K562 (cell line): ENCODE measurements at regions of chr7 and their contacts with region 1.

Region 1: GRCh38 chr7:93055543-93056107 is 62.2 kb downstream of the SAMD9 start:
- DNase-seq: peak in 3 of 4 experiments; percentile 11 to 58 (median 55)
- ATAC-seq: peak; percentile 58
- H3K4me3 ChIP-seq: no peak overlapping the region
- H3K27ac ChIP-seq: no peak overlapping the region
- H3K4me1 ChIP-seq: peaks cover 13 to 18% of the 10 kb centered on the region in 2 experiments; a peak in 4 of 5 replicates
- H3K27me3 ChIP-seq: no peaks in the 10 kb centered on the region
- CTCF ChIP-seq: peak; percentile 52 to 90 (median 56); a peak in 5 of 6 replicates
- EP300 ChIP-seq: no peak
- POLR2A ChIP-seq: no peak
- RAD21 ChIP-seq: peak; percentile 95 to 96

Region 2: DNA sequence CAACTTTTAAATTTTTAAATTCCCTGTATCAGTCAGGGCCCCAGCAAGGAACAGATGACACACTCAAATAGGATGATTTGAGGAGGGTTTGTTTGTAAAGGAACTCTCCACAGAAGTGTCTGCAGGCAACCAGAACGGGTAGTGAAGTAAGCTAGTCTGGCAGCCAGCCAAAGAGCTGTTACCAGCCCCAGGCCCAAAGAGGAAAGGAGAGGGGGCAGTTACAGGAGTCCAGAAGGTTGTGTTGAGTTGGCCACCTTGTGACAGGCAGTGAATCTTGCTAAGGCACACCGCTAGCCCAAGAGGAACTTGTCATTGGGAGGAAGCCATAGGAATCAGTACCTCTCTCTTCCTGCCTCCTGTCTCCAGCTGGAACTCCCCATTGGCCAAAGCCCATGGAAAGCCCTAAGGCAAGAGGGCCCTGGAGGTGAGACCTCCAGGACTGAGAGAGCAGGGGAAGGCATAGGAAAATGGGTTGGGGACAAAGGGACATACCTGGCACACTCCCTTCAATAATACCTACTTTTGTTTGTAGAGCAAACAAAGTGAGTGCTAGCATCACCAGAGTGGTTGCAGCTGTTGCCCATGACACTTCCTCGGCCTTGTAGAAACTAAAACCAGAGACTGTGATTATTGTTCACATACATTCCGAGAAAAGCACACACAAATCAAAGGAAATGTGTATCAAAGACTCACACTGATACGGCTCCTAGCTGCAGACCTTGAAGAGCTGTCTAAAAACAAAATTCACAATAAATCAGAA is 633.8 kb before region 1 on chr7:
- CTCF ChIA-PET with region 1: interaction called, 9 read pairs
- POLR2A ChIA-PET with region 1: no interaction called
- in situ Hi-C with region 1: no loop called
- intact Hi-C with region 1: loop called (anchors 10 kb)
- DNase-seq: peak in 3 of 4 experiments; percentile 26 to 59 (median 33)
- ATAC-seq: no peak
- H3K4me3 ChIP-seq: no peak overlapping the region
- H3K27ac ChIP-seq: no peak overlapping the region
- H3K4me1 ChIP-seq: peaks cover 14 to 20% of the 10 kb centered on the region in 2 experiments
- H3K27me3 ChIP-seq: no peaks in the 10 kb centered on the region
- CTCF ChIP-seq: no peak
- EP300 ChIP-seq: no peak
- POLR2A ChIP-seq: no peak
- RAD21 ChIP-seq: no peak

Region 3: DNA sequence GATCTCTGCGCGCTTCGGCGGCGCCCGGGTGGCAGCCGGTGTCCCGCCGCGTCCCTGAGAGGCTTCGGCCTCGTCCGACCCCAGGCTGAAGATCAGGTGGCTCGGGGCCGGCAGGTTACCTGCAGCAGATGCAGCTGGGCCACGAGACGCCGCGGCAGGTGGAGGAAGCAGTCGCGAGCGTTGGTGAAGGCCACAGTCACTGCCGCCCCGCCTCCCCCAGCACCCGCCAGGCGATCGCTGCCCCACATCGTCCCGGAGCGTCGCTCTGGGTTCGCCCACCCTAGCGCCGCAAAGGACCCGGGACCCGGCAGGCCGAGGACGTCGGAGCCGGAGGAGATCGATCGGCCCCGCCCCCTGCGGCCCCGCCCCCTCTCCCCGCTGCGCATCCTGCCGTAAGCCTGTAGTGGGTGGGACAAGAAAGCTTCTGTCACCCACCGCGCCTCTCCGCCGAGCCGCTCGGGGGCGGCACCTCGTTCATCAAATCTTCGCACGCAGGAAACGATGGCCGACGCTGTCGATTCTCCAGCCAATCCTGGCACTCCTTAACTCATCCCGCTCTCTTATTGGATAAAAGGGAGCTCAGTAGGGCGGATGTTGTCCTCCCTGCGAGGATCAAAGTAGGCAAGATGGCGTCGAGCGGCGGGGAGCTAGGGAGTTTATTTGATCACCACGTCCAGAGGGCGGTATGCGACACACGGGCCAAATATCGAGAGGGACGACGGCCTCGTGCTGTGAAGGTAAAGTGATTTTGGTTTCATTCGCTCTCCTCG is 527.3 kb before region 1 on chr7 and contains the starts of genes PEX1 and RBM48:
- CTCF ChIA-PET with region 1: no interaction called
- POLR2A ChIA-PET with region 1: no interaction called
- in situ Hi-C with region 1: no loop called
- intact Hi-C with region 1: loop called (anchors 10 kb)
- DNase-seq: peak; percentile 94 to 100 (median 98)
- ATAC-seq: peak; percentile 97
- H3K4me3 ChIP-seq: peak within 1 kb of the TSS; percentile 84
- H3K27ac ChIP-seq: peak within 1 kb of the TSS; percentile 98
- H3K4me1 ChIP-seq: peaks cover 7 to 10% of the 10 kb centered on the region in 2 experiments; a peak in 3 of 5 replicates
- H3K27me3 ChIP-seq: no peaks in the 10 kb centered on the region
- CTCF ChIP-seq: peak; percentile 64 to 67 (median 66)
- EP300 ChIP-seq: peak; percentile 54
- POLR2A ChIP-seq: peak; percentile 96
- RAD21 ChIP-seq: peak; percentile 19 to 23; a peak in 1 of 4 replicates
- polyA plus RNA-seq, gene PEX1: 9.4 to 10.3 TPM
- polyA plus RNA-seq, gene RBM48: 20.9 to 35.1 TPM

Region 4: DNA sequence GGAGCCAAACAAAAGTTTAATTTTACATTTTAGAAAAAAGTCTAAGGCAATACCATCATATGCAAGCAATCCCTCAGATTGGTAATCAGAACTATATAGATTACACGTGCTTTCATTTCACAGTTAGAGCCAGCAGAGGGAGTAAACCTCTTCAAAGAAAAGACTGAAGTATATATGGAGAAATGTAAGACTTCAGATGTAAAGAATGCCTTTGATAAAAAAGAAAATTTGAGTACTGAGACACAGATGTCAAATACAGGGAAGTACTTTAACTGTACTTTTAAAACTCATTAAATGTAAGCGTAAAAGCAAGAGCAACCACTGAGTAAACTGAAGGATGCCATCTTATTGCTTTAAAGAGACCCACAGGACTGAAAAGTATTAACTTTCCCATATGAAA is 364.0 kb before region 1 on chr7:
- CTCF ChIA-PET with region 1: interaction called, 3 read pairs
- POLR2A ChIA-PET with region 1: no interaction called
- in situ Hi-C with region 1: loop called (anchors 10 kb)
- intact Hi-C with region 1: loop called (anchors 1 kb)
- DNase-seq: peak; percentile 26 to 43 (median 32)
- ATAC-seq: peak; percentile 86
- H3K4me3 ChIP-seq: no peak overlapping the region
- H3K27ac ChIP-seq: no peak overlapping the region
- H3K4me1 ChIP-seq: peaks cover 7 to 11% of the 10 kb centered on the region in 2 experiments; a peak in 3 of 5 replicates
- H3K27me3 ChIP-seq: no peaks in the 10 kb centered on the region
- CTCF ChIP-seq: peak; percentile 25 to 63 (median 28); a peak in 3 of 6 replicates
- EP300 ChIP-seq: no peak
- POLR2A ChIP-seq: no peak
- RAD21 ChIP-seq: peak; percentile 55 to 77

Region 5: GRCh38 chr7:92880212-92881090 is 175.2 kb before region 1 on chr7:
- CTCF ChIA-PET with region 1: interaction called, 4 read pairs
- POLR2A ChIA-PET with region 1: no interaction called
- in situ Hi-C with region 1: no loop called
- intact Hi-C with region 1: loop called (anchors 1 kb)
- DNase-seq: peak in 2 of 4 experiments; percentile 45 to 66
- ATAC-seq: peak; percentile 97
- H3K4me3 ChIP-seq: no peak overlapping the region
- H3K27ac ChIP-seq: no peak overlapping the region
- H3K4me1 ChIP-seq: no peaks in the 10 kb centered on the region
- H3K27me3 ChIP-seq: no peaks in the 10 kb centered on the region
- CTCF ChIP-seq: peak; percentile 53 to 72 (median 54)
- EP300 ChIP-seq: no peak
- POLR2A ChIP-seq: no peak
- RAD21 ChIP-seq: peak; percentile 31 to 81; a peak in 3 of 4 replicates

Region 6: GRCh38 chr7:92968502-92968901 is 87.1 kb before region 1 on chr7:
- CTCF ChIA-PET with region 1: no interaction called
- POLR2A ChIA-PET with region 1: no interaction called
- in situ Hi-C with region 1: no loop called
- intact Hi-C with region 1: no loop called
- DNase-seq: no peak
- ATAC-seq: no peak
- H3K4me3 ChIP-seq: no peak overlapping the region
- H3K27ac ChIP-seq: no peak overlapping the region
- H3K4me1 ChIP-seq: no peaks in the 10 kb centered on the region
- H3K27me3 ChIP-seq: no peaks in the 10 kb centered on the region
- CTCF ChIP-seq: no peak
- EP300 ChIP-seq: no peak
- POLR2A ChIP-seq: no peak
- RAD21 ChIP-seq: no peak

Region 7: GRCh38 chr7:93212881-93213280 is 157.3 kb after region 1 on chr7:
- CTCF ChIA-PET with region 1: no interaction called
- POLR2A ChIA-PET with region 1: no interaction called
- in situ Hi-C with region 1: no loop called
- intact Hi-C with region 1: no loop called
- DNase-seq: no peak
- ATAC-seq: no peak
- H3K4me3 ChIP-seq: no peak overlapping the region
- H3K27ac ChIP-seq: no peak overlapping the region
- H3K4me1 ChIP-seq: peaks cover under 1 to 5% of the 10 kb centered on the region in 2 experiments; a peak in 3 of 5 replicates
- H3K27me3 ChIP-seq: no peaks in the 10 kb centered on the region
- CTCF ChIP-seq: no peak
- EP300 ChIP-seq: no peak
- POLR2A ChIP-seq: no peak
- RAD21 ChIP-seq: no peak

Region 8: GRCh38 chr7:93359520-93360198 is 304.0 kb after region 1 on chr7:
- CTCF ChIA-PET with region 1: no interaction called
- POLR2A ChIA-PET with region 1: no interaction called
- in situ Hi-C with region 1: no loop called
- intact Hi-C with region 1: no loop called
- DNase-seq: no peak
- ATAC-seq: no peak
- H3K4me3 ChIP-seq: no peak overlapping the region
- H3K27ac ChIP-seq: no peak overlapping the region
- H3K4me1 ChIP-seq: no peaks in the 10 kb centered on the region
- H3K27me3 ChIP-seq: 0 out of 5 replicates have a peak, but pooled peaks cover 0 to 5% of the 10 kb centered on the region in 2 experiments
- CTCF ChIP-seq: no peak
- EP300 ChIP-seq: no peak
- POLR2A ChIP-seq: no peak
- RAD21 ChIP-seq: no peak